CD4-positive, alpha-beta T cell (primary cell): ENCODE measurements at regions of chr16 and their contacts with region 1.

Region 1: DNA sequence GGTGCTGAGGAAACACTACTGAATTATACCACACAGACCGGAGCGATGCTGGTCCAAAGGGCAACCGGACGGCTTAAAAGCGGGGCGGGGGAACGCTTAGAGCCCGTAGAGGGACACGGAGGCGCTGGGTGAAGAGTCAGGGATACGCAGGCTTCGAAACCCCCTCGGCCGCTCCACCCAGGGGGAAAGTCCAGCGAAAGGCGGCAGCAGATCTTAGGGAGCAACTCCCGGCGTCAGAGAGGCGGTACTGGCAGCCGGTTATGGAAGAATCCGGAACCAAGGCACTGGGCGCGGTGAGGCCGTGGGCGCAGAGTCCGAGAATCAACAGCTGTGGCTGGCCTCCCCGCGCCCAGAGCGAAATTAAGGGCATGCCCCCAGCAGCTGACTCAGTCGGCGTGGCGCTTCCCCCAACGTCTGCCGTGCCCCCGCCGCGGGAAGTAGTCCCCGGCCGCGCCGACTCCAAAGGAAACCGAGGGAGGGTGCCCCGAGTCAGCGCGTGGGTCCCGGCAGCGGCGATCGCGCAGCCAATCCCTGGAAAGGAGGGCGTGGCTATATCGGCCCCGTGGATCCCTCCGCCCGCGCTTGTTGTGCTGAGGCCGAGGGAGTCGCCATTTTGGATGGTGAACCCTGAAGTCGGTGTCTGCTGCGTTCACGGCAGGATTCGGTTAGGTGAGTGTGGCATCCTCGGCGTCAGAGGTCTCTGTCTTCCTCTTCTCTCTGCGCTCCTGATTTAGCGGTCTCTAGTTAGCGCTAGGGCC is at the start of gene IST1:
- DNase-seq: peak; percentile 95 to 99 (median 98)
- ATAC-seq: peak; percentile 91
- H3K4me3 ChIP-seq: peak within 1 kb of the TSS; percentile 98
- H3K4me3 Mint-ChIP-seq: peak within 1 kb of the TSS; percentile 99
- H3K27ac ChIP-seq: peak within 1 kb of the TSS; percentile 94 to 95
- H3K27ac Mint-ChIP-seq: peak within 1 kb of the TSS; percentile 98
- H3K4me1 ChIP-seq: peaks cover 44% of the 10 kb centered on the region
- H3K4me1 Mint-ChIP-seq: peaks cover 36% of the 10 kb centered on the region
- H3K27me3 ChIP-seq: no peaks in the 10 kb centered on the region
- H3K27me3 Mint-ChIP-seq: no peaks in the 10 kb centered on the region
- CTCF ChIP-seq: no peak
- total RNA-seq, gene IST1: 411 to 412 TPM

Region 2: DNA sequence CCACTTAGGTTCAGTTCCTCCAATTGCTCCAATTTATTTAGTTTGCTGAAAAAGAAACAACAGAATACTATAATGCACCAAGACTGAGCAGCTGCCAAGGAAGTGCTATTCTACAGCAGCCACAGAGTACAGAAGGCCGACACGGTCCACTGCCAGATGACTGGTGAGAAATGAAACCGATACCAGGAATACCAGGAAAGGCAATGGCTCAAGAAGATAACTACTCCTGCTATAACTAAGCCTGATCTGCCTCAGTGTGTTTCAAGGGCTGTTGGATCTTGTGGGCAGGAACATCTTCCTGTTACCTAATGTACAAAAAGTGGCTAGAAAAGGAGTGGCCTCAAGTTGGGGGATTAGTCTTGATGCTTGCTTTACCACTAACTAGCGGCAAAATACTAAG is 236.3 kb before region 1 on chr16:
- CTCF ChIA-PET with region 1: no interaction called
- POLR2A ChIA-PET with region 1: no interaction called
- intact Hi-C with region 1: no loop called
- DNase-seq: no peak
- ATAC-seq: no peak
- H3K4me3 ChIP-seq: no peak overlapping the region
- H3K4me3 Mint-ChIP-seq: no peak overlapping the region
- H3K27ac ChIP-seq: no peak overlapping the region
- H3K27ac Mint-ChIP-seq: no peak overlapping the region
- H3K4me1 ChIP-seq: no peaks in the 10 kb centered on the region
- H3K4me1 Mint-ChIP-seq: no peaks in the 10 kb centered on the region
- H3K27me3 ChIP-seq: no peaks in the 10 kb centered on the region
- H3K27me3 Mint-ChIP-seq: no peaks in the 10 kb centered on the region
- CTCF ChIP-seq: no peak

Region 3: DNA sequence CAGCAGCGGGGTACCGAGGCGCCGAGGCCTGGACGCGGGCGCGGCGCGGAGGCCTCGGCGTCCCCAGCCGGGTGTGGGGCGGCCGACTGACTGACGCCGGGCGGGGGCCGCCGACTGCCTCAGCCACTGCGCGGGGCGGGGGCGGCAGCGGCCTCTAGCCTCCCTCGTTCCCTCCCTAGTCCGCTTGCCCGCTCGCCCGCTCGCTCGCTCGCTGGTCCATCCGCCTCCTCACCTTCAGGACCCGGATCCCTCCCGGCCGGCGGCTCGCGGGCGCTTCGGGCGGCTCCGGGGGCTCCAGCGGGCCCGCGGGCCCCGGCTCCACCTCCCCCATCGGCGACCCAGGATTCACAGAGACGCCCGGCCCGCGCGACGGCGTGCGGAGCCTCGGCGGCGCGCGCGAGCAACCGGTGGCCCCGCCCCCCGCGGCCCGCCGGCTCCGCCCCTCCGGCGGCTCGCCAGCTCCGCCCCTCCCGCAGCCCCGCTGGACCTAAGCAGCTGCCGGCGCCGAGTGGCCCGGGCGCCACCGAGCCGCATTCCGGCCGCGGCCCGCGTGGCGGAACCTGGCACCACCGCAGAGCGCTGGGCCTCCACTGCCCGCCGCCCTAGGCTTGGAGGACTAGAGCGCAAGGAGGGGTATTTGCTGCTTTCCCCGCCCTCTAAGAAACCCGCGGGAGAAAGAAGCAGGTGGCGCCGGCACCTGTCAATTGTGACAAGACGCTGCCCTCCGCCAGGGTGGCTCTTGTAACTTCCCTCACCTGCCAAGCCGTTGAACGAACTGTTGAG is 171.4 kb before region 1 on chr16:
- CTCF ChIA-PET with region 1: interaction called, 3 read pairs
- POLR2A ChIA-PET with region 1: no interaction called
- intact Hi-C with region 1: loop called in 1 of 2 experiments (anchors 5 kb)
- DNase-seq: peak; percentile 59 to 93 (median 78)
- ATAC-seq: peak; percentile 81
- H3K4me3 ChIP-seq: peak overlapping the region; percentile 84
- H3K4me3 Mint-ChIP-seq: peak overlapping the region; percentile 92
- H3K27ac ChIP-seq: no peak overlapping the region
- H3K27ac Mint-ChIP-seq: peak overlapping the region; percentile 74
- H3K4me1 ChIP-seq: peaks cover 11% of the 10 kb centered on the region
- H3K4me1 Mint-ChIP-seq: peaks cover 18% of the 10 kb centered on the region
- H3K27me3 ChIP-seq: no peaks in the 10 kb centered on the region
- H3K27me3 Mint-ChIP-seq: no peaks in the 10 kb centered on the region
- CTCF ChIP-seq: no peak

Region 4: DNA sequence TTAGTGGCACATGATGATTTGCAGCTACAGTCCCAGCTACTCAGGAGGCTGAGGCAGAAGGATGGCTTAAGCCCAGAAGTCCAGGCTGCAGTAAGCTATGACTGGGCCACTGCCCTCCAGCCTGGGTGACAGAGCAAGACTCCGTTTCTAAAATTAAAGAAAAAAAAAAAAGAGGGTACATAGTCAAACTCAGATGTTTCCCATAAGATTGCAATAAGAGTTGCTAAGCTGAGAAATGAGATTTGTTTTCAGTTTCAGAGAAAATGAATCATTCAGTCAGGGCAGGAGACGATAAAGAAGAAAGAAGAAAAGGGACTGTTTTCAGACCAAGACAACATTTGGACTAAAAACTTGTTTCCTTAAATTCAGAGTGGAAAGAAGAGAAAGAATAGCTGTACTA is 140.4 kb before region 1 on chr16:
- CTCF ChIA-PET with region 1: no interaction called
- POLR2A ChIA-PET with region 1: interaction called, 10 read pairs
- intact Hi-C with region 1: no loop called
- DNase-seq: no peak
- ATAC-seq: no peak
- H3K4me3 ChIP-seq: no peak overlapping the region
- H3K4me3 Mint-ChIP-seq: no peak overlapping the region
- H3K27ac ChIP-seq: no peak overlapping the region
- H3K27ac Mint-ChIP-seq: no peak overlapping the region
- H3K4me1 ChIP-seq: no peaks in the 10 kb centered on the region
- H3K4me1 Mint-ChIP-seq: no peaks in the 10 kb centered on the region
- H3K27me3 ChIP-seq: no peaks in the 10 kb centered on the region
- H3K27me3 Mint-ChIP-seq: no peaks in the 10 kb centered on the region
- CTCF ChIP-seq: no peak

Region 5: DNA sequence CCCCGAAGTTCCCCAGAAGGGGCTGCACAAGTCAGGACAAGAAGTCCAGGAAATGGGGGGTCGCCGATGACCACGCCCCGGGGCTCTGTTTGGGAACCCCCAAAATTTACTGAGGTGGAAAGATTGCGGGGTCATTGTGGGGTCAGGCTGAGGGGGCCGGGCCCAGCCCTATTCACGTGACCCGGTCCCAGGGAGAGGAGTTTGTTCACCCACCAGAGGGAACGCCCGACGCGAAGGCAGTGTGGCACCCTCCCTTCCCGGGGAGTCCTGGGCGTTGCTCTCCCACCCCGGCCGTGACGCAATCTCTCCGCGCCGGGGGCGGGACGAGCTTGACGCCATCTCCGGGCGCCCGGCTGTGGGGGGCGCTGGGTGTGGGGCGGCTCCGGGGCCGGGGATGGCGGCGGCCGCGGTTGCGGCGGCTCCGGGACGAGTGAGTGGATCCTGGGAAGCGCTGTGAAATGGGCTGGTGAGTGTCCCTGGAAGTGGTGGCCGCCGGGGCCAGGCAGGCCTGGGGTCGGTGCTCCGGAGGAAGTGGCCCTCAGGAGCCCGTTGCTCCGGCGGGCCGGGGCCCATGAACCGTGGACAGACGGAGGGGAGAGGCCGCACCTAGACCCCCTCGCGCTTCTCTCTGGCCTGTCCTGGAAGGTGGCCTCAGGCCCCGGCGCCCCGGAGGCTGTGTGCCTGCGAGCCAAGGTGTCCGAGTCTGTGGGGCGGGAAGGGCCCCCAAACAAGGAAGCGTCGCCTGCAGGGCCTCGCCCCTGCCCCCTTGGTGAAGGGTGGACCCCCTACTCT is 49.3 kb before region 1 on chr16 and contains the start of gene ATXN1L:
- CTCF ChIA-PET with region 1: no interaction called
- POLR2A ChIA-PET with region 1: interaction called, 5 read pairs
- intact Hi-C with region 1: loop called in 1 of 2 experiments (anchors 2 kb)
- DNase-seq: peak; percentile 84 to 97 (median 90)
- ATAC-seq: peak; percentile 91
- H3K4me3 ChIP-seq: peak within 1 kb of the TSS; percentile 97
- H3K4me3 Mint-ChIP-seq: peak within 1 kb of the TSS; percentile 96
- H3K27ac ChIP-seq: peak within 1 kb of the TSS; percentile 82 to 91
- H3K27ac Mint-ChIP-seq: peak within 1 kb of the TSS; percentile 99
- H3K4me1 ChIP-seq: peaks cover 18% of the 10 kb centered on the region
- H3K4me1 Mint-ChIP-seq: peaks cover 35% of the 10 kb centered on the region
- H3K27me3 ChIP-seq: no peaks in the 10 kb centered on the region
- H3K27me3 Mint-ChIP-seq: no peaks in the 10 kb centered on the region
- CTCF ChIP-seq: no peak
- total RNA-seq, gene ATXN1L: 61.0 to 61.1 TPM